ENCODE measurements at regions of chr2 and their contacts with region 1.

Region 1: DNA sequence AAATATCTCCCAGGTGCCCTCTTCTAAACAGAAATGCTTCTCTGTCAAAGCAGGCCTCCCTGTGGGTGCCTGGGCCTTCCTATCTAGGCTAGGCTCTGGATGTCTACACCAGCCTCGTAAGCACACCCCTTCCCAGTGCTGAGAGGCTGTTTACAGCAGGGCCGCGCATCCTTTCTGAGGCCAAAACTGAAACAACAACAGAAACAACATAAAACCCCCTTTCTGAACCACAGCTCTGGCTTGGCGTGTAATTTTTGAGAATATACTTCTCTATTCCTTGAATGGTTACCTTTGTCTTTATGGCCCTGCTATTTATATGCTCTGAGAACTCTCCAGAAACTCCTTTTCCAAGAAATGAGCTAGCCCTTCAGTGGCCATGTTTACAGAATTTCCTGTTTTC is 118.4 kb downstream of the BCL2L11 start:
- H3K4me3 Mint-ChIP-seq: no peak overlapping the region
- H3K27ac Mint-ChIP-seq: peak overlapping the region; percentile 84
- H3K4me1 Mint-ChIP-seq: peaks cover 46% of the 10 kb centered on the region
- H3K27me3 Mint-ChIP-seq: no peaks in the 10 kb centered on the region

Region 2: GRCh38 chr2:110732422-110733413 is 506.4 kb before region 1 on chr2 and contains the start of gene ACOXL:
- intact Hi-C with region 1: no loop called
- H3K4me3 Mint-ChIP-seq: peak within 1 kb of the TSS; percentile 53
- H3K27ac Mint-ChIP-seq: no peak within 1 kb of the TSS
- H3K4me1 Mint-ChIP-seq: peaks cover 15% of the 10 kb centered on the region
- H3K27me3 Mint-ChIP-seq: peaks cover 73% of the 10 kb centered on the region

Region 3: DNA sequence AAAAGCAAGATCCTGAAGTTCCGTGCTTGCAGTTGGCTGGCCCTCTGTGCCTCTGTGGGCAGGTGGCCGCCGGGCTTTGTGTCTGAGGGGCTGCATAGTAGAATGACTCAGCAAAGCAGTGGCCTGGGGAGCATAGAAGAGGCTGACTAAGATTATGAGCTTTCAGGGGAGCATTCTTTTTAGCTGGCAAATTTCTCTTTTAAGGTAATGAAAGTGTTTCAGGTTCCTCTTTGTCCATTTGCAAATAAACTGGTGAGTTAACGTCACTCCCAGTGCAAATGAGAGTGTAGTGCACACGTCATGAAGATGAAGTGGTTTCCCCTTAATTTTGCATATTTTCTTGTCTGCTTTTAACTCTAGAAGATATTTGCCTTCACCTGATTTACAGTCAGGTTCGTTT is 19.8 kb before region 1 on chr2:
- intact Hi-C with region 1: loop called (anchors 2 kb)
- H3K4me3 Mint-ChIP-seq: peak overlapping the region; percentile 50
- H3K27ac Mint-ChIP-seq: peak overlapping the region; percentile 85
- H3K4me1 Mint-ChIP-seq: peaks cover 44% of the 10 kb centered on the region
- H3K27me3 Mint-ChIP-seq: peaks cover 3% of the 10 kb centered on the region

Region 4: DNA sequence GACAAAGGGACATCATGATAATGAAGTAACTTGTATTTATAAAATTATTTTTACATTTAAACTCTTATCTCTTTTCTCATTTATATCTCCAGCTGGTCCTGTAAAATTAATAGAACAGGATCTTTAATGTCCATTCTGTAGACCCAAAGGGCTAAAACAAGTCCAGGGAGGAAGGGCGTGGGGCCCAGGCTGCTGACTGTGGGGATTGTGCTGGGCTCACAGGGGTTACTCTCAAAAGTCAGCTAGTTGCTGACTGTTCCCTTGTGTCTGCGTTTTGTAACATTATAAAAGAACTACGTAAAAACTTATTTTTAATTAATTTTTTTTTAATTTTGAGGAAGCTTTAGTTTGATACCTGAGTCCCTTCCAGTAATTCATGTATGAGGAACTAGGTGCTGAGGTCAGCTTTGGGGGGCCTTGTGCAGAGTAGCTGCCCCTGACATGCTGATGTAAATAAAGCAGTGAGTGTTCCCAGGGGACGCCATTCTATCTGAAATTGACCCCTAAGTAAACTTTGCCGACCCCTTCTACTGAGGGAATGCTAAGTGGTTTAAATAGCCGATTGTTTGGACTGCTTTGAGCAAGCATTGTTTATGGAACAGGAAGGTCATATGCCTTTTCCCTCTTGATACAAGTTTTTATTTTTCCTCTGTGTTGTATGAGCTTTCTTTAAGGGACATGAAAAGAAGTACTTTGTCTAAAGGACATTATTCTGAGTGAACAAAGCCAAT is 715.7 kb after region 1 on chr2:
- intact Hi-C with region 1: no loop called
- H3K4me3 Mint-ChIP-seq: no peak overlapping the region
- H3K27ac Mint-ChIP-seq: no peak overlapping the region
- H3K4me1 Mint-ChIP-seq: peaks cover 19% of the 10 kb centered on the region
- H3K27me3 Mint-ChIP-seq: no peaks in the 10 kb centered on the region